PC-9 (cell line): ENCODE measurements at regions of chr1 and their contacts with region 1.

Region 1: DNA sequence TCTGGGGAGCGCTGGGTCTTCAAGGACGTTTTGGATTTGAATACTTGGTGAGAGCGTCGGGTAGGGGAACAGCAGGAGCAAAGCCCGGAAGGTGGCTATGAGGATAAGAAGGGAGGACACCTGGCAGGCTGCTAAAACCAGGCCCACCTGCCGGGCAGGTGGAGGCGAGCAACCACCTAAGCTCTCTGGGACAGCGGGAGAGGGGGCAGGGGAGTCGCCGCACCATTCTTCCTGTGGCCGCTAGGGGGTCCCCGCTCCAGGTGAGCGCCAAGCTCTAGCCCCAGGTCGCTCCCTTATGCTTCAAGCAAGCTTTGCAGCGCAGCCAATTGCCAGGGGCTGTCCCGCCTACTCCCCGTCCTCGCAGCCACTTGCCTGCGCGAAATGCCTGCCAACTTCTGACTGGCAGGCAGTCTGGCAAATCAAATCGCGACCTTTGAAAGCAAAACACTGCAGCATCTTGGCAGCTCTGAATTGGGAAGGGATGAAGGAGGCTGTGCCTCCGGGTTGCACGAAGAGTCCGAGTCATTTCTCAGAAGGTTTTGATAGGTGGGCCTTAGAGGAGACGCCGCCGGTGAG is at the start of gene NIPAL3:
- DNase-seq: peak; percentile 95 to 98
- H3K4me3 ChIP-seq: peak within 1 kb of the TSS; percentile 63
- H3K27ac ChIP-seq: peak within 1 kb of the TSS; percentile 64
- H3K4me1 ChIP-seq: peaks cover 41% of the 10 kb centered on the region
- H3K27me3 ChIP-seq: no peaks in the 10 kb centered on the region
- CTCF ChIP-seq: peak; percentile 67
- total RNA-seq, gene NIPAL3: 34.7 and 42.0 TPM in 2 replicates

Region 2: GRCh38 chr1:24502709-24503058 is 87.3 kb after region 1 on chr1 and contains the start of gene RCAN3:
- CTCF ChIA-PET with region 1: interaction called, 5 read pairs
- POLR2A ChIA-PET with region 1: interaction called, 5 read pairs
- intact Hi-C with region 1: loop called (anchors 1 kb)
- DNase-seq: peak; percentile 65 to 91
- H3K4me3 ChIP-seq: peak within 1 kb of the TSS; percentile 74
- H3K27ac ChIP-seq: no peak within 1 kb of the TSS
- H3K4me1 ChIP-seq: peaks cover 6% of the 10 kb centered on the region; the same call in 1 of the 2 replicates
- H3K27me3 ChIP-seq: no peaks in the 10 kb centered on the region
- CTCF ChIP-seq: no peak
- total RNA-seq, gene RCAN3: 21.9 and 27.4 TPM in 2 replicates

Region 3: DNA sequence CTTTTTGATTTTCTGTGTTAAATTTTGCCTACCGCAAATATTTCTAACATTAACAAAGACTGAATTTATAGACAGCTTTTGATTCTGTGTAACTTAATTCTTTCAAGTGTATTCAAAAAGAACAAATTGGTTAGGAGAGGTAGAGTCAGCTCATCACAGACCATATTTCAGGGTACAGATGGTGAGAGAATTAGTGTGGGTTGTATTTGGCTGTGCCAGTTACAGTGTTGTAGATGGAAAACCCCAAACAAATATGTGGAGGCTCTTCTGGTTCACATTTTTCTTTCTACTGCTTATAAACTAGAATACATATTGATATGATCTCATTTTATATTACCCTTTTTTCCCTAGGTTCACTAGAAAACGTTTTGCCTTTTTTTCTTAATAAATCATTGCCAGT is 98.3 kb after region 1 on chr1:
- CTCF ChIA-PET with region 1: interaction called, 7 read pairs
- POLR2A ChIA-PET with region 1: no interaction called
- intact Hi-C with region 1: loop called (anchors 5 kb)
- DNase-seq: no peak
- H3K4me3 ChIP-seq: no peak overlapping the region
- H3K27ac ChIP-seq: no peak overlapping the region
- H3K4me1 ChIP-seq: no peaks in the 10 kb centered on the region
- H3K27me3 ChIP-seq: no peaks in the 10 kb centered on the region
- CTCF ChIP-seq: no peak

Region 4: DNA sequence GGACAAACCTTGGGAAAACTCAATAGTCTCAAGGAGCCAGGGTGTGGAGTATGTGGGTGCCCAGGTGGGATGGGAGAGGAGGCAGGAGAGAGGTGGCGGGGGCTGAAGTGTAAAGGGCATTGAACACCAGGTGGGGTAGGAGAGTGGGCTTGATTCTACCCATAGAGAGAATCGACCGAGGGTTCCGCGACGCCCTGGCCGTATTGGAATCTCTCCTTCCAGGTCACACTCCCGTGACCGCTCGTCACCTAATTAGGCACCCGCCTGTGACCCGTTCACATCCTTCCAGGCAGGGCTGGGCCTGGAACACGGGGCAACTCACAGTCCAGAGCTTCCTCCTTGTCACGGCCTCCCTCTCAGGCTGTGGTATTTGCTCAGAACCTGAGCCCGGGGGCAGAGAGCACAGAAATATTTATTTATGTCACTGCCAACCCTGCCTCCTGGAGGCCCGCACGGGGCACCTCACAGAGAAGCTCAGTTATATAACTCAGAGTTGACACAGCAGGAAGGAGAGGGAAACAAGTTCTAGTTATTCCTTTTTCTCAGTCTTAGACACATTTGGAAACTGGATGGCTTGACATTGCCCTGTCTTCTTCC is 152.5 kb after region 1 on chr1:
- CTCF ChIA-PET with region 1: interaction called, 4 read pairs
- POLR2A ChIA-PET with region 1: interaction called, 4 read pairs
- intact Hi-C with region 1: loop called (anchors 10 kb)
- DNase-seq: peak; percentile 71 to 81
- H3K4me3 ChIP-seq: no peak overlapping the region
- H3K27ac ChIP-seq: 0 out of 2 replicates have a peak overlapping the region, but pooled peaks have one; percentile 41
- H3K4me1 ChIP-seq: peaks cover 22% of the 10 kb centered on the region
- H3K27me3 ChIP-seq: no peaks in the 10 kb centered on the region
- CTCF ChIP-seq: no peak; the same call in 1 of the 2 replicates

Region 5: GRCh38 chr1:24642481-24643361 is 227.3 kb after region 1 on chr1 and contains the start of gene SRRM1:
- CTCF ChIA-PET with region 1: no interaction called
- POLR2A ChIA-PET with region 1: interaction called, 5 read pairs
- intact Hi-C with region 1: loop called (anchors 2 kb)
- DNase-seq: peak; percentile 94 to 97
- H3K4me3 ChIP-seq: peak within 1 kb of the TSS; percentile 70
- H3K27ac ChIP-seq: peak within 1 kb of the TSS; percentile 96
- H3K4me1 ChIP-seq: peaks cover 15% of the 10 kb centered on the region
- H3K27me3 ChIP-seq: no peaks in the 10 kb centered on the region
- CTCF ChIP-seq: no peak
- total RNA-seq, gene SRRM1: 111 and 124 TPM in 2 replicates

Region 6: GRCh38 chr1:24830680-24831272 is 415.4 kb after region 1 on chr1:
- CTCF ChIA-PET with region 1: interaction called, 6 read pairs
- POLR2A ChIA-PET with region 1: interaction called, 3 read pairs
- intact Hi-C with region 1: loop called (anchors 5 kb)
- DNase-seq: peak in 1 of 2 experiments; percentile 54
- H3K4me3 ChIP-seq: no peak overlapping the region
- H3K27ac ChIP-seq: no peak overlapping the region
- H3K4me1 ChIP-seq: no peaks in the 10 kb centered on the region
- H3K27me3 ChIP-seq: no peaks in the 10 kb centered on the region
- CTCF ChIP-seq: peak; percentile 80

Region 7: GRCh38 chr1:25874934-25875855 is 1459.8 kb after region 1 on chr1 and contains the start of gene PAQR7:
- CTCF ChIA-PET with region 1: no interaction called
- POLR2A ChIA-PET with region 1: interaction called, 17 read pairs
- intact Hi-C with region 1: no loop called
- DNase-seq: peak; percentile 38 to 85
- H3K4me3 ChIP-seq: peak within 1 kb of the TSS; percentile 71
- H3K27ac ChIP-seq: peak within 1 kb of the TSS; percentile 71
- H3K4me1 ChIP-seq: peaks cover 46% of the 10 kb centered on the region
- H3K27me3 ChIP-seq: no peaks in the 10 kb centered on the region
- CTCF ChIP-seq: no peak
- total RNA-seq, gene PAQR7: 30.2 and 34.0 TPM in 2 replicates